Ovary (tissue), 10 donors: ENCODE measurements at regions of chr3 and their contacts with region 1.

Region 1: GRCh38 chr3:52428151-52429005 is 16.5 kb downstream of the SEMA3G start:
- DNase-seq: peak; percentile 60 to 81 (median 65)
- H3K4me3 ChIP-seq: no peak overlapping the region
- H3K27ac ChIP-seq: no peak overlapping the region
- H3K4me1 ChIP-seq: peaks cover under 1% of the 10 kb centered on the region
- H3K27me3 ChIP-seq: no peaks in the 10 kb centered on the region
- CTCF ChIP-seq: peak; percentile 60 to 76 (median 74)
- EP300 ChIP-seq: no peak
- POLR2A ChIP-seq: no peak

Region 2: GRCh38 chr3:52323526-52324295 is 104.7 kb before region 1 on chr3:
- intact Hi-C with region 1: no loop called
- DNase-seq: no peak
- H3K4me3 ChIP-seq: no peak overlapping the region
- H3K27ac ChIP-seq: no peak overlapping the region
- H3K4me1 ChIP-seq: no peaks in the 10 kb centered on the region
- H3K27me3 ChIP-seq: no peaks in the 10 kb centered on the region
- CTCF ChIP-seq: no peak
- EP300 ChIP-seq: no peak
- POLR2A ChIP-seq: no peak

Region 3: DNA sequence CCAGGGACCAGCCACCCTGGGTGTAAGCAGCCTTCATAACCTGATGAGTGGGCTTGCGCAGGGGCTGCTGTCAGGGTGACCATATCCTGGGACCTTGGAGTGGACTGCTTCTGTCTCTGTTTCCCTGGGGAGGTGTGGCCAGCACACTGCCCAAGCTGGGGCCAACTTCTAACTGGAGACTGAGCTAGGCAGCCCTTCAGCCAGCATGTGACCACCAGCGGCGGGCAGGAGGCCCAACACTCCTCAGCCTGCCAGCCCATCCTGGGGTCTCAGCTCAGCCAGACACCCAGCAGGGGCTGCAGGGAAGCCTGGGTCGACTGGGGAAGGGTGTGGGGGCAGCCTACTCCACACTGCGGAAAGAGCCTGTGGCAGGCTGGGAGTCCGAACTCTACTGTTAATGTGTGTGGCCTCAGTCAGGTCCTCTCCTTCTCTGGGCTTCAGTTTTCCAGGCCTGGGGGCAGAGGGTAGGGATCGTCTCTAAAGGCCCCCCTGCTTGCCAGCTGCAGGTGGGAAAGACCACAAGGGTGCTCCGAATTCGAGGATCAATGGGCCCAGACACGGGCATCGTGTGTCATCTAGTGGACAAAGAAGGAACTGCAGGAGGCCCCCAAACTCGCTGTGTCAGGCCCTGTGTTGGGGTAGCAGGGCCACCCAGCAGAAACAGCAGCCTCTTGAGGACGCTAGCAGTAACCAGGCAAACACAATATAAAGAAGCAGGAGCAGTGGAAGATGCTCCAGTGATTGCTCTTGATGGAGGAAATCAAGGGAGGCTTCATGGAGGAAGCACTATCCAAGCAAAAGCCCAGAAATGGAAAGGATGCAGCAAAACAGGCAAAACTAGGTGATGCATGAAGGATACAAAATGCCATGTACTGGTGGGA is 18.5 kb after region 1 on chr3:
- intact Hi-C with region 1: loop called in 2 of 4 experiments (anchors 2 kb)
- DNase-seq: peak in 4 of 5 donors; percentile 55 to 70 (median 66)
- H3K4me3 ChIP-seq: no peak overlapping the region
- H3K27ac ChIP-seq: no peak overlapping the region
- H3K4me1 ChIP-seq: peaks cover 1% of the 10 kb centered on the region
- H3K27me3 ChIP-seq: no peaks in the 10 kb centered on the region
- CTCF ChIP-seq: peak; percentile 81 to 98 (median 95)
- EP300 ChIP-seq: no peak
- POLR2A ChIP-seq: no peak